ENCODE measurements at regions of chr13 and their contacts with region 1.

Region 1: GRCh38 chr13:39616087-39616694 is 13.2 kb upstream of the LHFPL6 start:
- DNase-seq: peak; percentile 54
- ATAC-seq: peak; percentile 94
- H3K4me3 Mint-ChIP-seq: no peak overlapping the region
- H3K27ac Mint-ChIP-seq: no peak overlapping the region
- H3K4me1 Mint-ChIP-seq: peaks cover 8% of the 10 kb centered on the region; the same call in 1 of the 2 replicates
- H3K27me3 Mint-ChIP-seq: no peaks in the 10 kb centered on the region
- CTCF ChIP-seq: peak; percentile 65

Region 2: DNA sequence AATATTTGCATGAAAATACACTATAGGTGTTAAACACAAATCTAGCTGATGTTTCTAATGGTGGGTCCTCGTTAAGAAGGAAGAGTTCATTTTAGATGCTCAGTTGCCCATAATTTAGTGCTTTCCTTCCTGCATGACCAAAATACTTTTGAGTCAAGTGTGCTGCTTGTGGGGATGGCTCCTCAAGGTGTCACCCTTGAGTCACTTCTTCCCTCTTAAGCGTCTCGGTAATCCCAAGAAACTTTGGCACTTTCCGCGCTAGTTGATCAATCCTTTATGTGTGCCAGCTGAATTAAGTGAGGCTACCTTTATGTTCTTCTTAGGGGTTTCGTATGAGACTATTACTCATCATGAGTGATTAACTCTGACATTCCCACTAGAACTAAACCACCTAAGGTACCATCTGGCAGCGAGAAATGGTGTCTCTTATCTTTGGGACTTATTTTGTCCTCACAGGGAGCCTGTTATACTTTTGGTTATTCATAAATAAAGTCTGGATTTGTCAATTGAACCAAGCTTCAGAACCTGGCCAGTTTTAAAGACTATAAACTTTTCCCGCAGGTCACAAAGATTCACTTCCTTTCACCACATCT is 471.2 kb before region 1 on chr13:
- CTCF ChIA-PET with region 1: interaction called, 23 read pairs
- POLR2A ChIA-PET with region 1: no interaction called
- DNase-seq: peak; percentile 53
- ATAC-seq: peak; percentile 88
- H3K4me3 Mint-ChIP-seq: no peak overlapping the region
- H3K27ac Mint-ChIP-seq: no peak overlapping the region
- H3K4me1 Mint-ChIP-seq: no peaks in the 10 kb centered on the region
- H3K27me3 Mint-ChIP-seq: peaks cover 15% of the 10 kb centered on the region
- CTCF ChIP-seq: peak; percentile 44; the same call in 1 of the 2 replicates

Region 3: DNA sequence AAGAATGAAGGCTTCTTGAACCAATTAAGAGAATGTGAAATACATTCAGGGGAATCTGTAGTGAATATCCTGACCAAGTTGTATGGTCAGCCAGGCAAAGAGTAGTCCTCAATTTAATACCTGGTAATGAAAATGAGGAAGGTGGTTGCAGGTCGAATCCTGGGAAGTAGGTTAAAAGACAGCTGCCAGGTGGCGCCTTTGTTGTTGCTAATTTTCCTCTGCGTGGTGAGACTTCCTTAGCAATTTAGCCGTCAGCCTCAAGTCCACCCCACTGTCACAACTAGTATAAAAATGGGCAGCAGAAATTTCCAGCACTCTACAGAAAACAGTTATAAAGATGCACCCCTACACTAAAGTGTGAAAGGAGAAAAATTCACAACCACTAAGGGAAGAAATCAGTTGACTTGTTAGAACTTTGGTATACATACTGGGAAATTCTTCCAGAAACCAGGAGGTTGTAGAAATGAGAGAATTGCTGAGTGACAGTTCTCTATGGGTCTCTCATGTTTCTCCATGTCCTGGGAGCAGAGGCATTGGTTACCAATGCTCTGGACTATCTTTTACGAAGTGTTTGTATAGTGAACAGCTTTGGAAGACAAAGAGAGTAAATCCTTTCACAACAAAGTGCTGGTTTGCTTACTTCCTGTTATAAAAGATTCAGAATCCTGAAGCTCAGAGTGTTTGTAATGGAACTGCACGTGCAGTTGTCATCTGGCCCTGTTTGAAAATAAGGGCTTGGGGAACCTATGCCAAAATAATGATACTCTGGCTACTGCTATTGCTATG is 342.0 kb before region 1 on chr13:
- CTCF ChIA-PET with region 1: interaction called, 34 read pairs
- POLR2A ChIA-PET with region 1: no interaction called
- DNase-seq: peak; percentile 15
- ATAC-seq: peak; percentile 59
- H3K4me3 Mint-ChIP-seq: no peak overlapping the region
- H3K27ac Mint-ChIP-seq: no peak overlapping the region
- H3K4me1 Mint-ChIP-seq: peaks cover 11% of the 10 kb centered on the region; the same call in 1 of the 2 replicates
- H3K27me3 Mint-ChIP-seq: no peaks in the 10 kb centered on the region; the same call in 1 of the 2 replicates
- CTCF ChIP-seq: no peak

Region 4: GRCh38 chr13:39385621-39386231 is 230.5 kb before region 1 on chr13:
- CTCF ChIA-PET with region 1: interaction called, 19 read pairs
- POLR2A ChIA-PET with region 1: no interaction called
- DNase-seq: no peak
- ATAC-seq: peak; percentile 96
- H3K4me3 Mint-ChIP-seq: no peak overlapping the region
- H3K27ac Mint-ChIP-seq: no peak overlapping the region
- H3K4me1 Mint-ChIP-seq: peaks cover 22% of the 10 kb centered on the region
- H3K27me3 Mint-ChIP-seq: peaks cover 100% of the 10 kb centered on the region
- CTCF ChIP-seq: no peak

Region 5: DNA sequence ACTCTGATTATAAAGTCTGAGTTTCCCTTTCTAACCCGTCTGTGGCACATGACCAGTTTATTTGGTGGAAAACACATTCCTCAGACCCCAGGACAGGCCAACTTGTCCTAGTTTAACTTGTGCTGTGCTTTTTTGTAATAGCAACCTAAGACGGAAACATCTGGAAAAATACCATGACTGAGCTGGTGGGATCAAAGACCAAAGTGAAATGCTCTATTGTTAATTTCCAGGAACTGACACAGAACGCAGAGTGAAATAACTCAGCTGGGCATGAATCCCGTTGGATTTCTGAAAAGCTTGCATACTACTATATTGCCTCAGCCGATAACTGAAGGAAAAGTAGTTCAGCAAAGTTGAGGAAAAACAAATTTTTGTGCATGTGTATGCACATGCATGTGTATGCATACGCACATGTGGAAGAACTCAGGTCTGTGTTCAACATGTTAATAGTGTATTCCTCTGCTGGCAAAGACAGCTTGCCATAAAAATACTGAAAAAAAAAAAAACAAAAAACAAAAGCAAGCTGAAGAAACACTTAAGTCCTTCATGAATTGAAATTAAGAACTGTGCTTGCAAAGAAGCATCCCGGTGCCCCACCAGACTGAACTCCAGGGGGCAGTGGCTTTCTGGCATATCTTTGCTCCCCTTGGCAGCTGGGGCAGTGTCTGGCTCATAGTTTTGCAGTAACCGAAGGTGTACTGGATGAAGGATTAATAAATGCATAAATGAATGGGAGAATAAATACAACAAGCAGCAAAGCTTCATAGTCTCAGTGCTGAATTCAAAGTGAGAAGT is 201.0 kb before region 1 on chr13:
- CTCF ChIA-PET with region 1: interaction called, 48 read pairs
- POLR2A ChIA-PET with region 1: no interaction called
- DNase-seq: peak; percentile 56
- ATAC-seq: peak; percentile 36; the same call in 1 of the 2 replicates
- H3K4me3 Mint-ChIP-seq: no peak overlapping the region
- H3K27ac Mint-ChIP-seq: no peak overlapping the region
- H3K4me1 Mint-ChIP-seq: peaks cover 75% of the 10 kb centered on the region
- H3K27me3 Mint-ChIP-seq: peaks cover 6% of the 10 kb centered on the region
- CTCF ChIP-seq: peak; percentile 21; the same call in 1 of the 2 replicates

Region 6: DNA sequence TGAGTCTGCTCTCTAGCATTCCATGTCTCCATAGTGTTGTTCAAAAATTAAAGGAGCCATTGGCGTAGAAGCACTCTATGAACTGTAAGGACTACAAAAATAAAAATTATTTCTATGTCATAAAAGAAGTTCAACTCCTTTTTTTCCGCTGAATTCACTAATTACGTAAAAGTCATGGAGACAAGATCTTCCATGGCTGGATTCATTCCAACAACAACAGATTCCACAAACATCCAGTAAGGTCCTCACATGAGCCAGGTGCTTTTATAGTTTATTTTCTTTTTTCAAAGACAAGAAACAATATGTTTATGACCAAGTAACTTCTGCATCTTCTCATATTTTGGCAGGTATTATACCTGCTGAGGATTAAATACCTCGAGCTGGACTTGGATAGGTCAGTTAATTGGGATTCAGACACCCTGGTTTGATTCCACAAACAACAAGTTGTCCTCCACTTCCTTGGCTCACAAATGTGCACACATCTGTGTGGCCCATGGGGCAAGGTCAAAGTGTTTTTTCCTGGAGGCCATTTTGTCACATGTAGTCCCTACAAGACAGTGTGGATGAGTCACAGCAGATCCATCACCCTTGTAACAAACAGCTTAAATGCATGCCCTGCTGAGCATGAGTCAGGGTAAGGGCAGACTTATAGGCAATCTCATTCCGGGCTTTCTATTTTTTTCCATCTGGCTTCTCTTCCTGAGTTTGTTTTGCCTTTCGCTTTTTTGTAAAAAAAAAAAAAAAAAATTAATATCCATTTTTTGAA is 514.9 kb after region 1 on chr13:
- CTCF ChIA-PET with region 1: no interaction called
- POLR2A ChIA-PET with region 1: no interaction called
- DNase-seq: no peak
- ATAC-seq: no peak
- H3K4me3 Mint-ChIP-seq: no peak overlapping the region
- H3K27ac Mint-ChIP-seq: no peak overlapping the region
- H3K4me1 Mint-ChIP-seq: peaks cover 15% of the 10 kb centered on the region
- H3K27me3 Mint-ChIP-seq: no peaks in the 10 kb centered on the region
- CTCF ChIP-seq: no peak

Measured in WTC11 (cell line).